ENCODE measurements at regions of chr18 and their contacts with region 1.

Region 1: GRCh38 chr18:34322365-34323289 is 97.9 kb upstream of the NOL4 start:
- DNase-seq: peak; percentile 19
- CTCF ChIP-seq: peak; percentile 83

Region 2: GRCh38 chr18:33839441-33840211 is 483.0 kb before region 1 on chr18:
- in situ Hi-C with region 1: loop called (anchors 25 kb)
- DNase-seq: peak; percentile 37
- CTCF ChIP-seq: peak; percentile 72

Region 3: DNA sequence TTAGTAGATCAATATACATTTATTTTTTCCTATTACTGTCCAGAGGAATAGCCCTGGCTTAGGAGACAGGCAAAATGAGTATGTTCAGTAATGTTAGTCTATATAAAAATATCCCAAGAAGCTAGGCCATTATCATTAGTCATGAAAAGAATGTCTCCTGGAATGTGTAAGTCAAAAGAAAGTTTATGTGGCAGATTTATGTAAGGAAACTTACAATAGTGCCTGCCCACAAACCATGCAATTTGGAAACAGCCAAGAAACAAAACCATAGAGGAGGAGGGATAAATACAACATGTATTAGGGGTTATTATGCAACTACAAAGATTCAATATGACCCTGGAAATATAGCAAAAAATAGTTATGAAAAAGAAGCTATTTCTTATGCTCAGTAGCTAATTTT is 194.2 kb before region 1 on chr18:
- in situ Hi-C with region 1: loop called (anchors 25 kb)
- DNase-seq: no peak
- CTCF ChIP-seq: no peak

Region 4: DNA sequence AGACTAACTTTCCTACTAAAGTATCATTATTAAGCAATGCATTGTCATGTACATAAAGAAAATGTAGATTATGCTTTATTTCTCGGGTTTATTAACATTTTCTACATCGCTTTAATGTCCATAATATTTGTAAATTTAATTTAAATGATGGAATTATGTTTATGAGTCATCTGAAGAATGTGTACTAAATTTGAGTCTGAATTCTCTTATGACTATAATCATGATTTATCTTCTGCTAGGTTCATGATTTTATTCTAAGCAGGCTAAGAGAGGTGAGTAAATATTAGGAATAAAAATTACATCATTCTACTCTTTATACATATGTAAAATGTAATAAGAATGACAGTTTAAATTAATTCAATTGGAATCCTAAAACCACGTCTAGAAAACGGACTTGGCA is 108.4 kb after region 1 on chr18:
- in situ Hi-C with region 1: no loop called
- DNase-seq: no peak
- CTCF ChIP-seq: no peak